ENCODE measurements at regions of chr15 and their contacts with region 1.

Region 1: DNA sequence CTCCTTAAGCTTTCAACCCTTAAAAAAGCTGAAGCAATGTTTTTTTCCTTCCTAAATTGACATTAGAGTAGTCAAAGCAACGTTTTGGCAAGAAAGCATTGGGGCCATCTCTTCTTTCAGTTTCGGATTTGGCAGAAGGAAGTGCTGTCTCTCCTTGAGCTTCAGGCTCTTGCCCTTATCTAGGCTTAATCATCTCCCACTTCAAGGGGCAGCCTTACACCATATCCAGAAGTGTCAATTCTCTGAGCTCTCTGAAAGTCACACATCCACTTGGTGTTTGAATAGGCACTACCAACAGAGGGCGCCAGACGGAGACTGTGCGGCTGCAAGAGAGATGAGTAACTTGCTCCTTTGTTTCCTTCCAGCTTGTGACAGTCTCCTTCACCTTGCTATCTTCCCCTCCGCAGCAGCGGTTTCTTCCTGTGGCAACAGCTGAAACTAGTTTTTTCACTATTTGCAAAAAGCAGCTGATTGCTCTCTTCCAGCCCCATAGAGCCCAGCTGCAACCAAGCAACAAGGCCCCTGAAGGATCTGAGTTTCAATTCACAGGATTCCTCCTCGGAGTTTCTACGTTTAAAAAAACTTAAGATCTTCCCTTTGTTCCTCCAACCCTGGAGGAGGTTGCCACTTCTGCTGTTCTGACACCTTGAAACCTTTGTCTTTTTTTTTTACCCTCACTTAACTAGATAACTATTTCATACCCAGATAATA is 147.0 kb upstream of the SLCO3A1 start:
- DNase-seq: peak; percentile 97
- H3K4me3 Mint-ChIP-seq: peak overlapping the region; percentile 11
- H3K27ac Mint-ChIP-seq: peak overlapping the region; percentile 67
- H3K4me1 Mint-ChIP-seq: peaks cover 17% of the 10 kb centered on the region
- H3K27me3 Mint-ChIP-seq: peaks cover 25% of the 10 kb centered on the region

Region 2: DNA sequence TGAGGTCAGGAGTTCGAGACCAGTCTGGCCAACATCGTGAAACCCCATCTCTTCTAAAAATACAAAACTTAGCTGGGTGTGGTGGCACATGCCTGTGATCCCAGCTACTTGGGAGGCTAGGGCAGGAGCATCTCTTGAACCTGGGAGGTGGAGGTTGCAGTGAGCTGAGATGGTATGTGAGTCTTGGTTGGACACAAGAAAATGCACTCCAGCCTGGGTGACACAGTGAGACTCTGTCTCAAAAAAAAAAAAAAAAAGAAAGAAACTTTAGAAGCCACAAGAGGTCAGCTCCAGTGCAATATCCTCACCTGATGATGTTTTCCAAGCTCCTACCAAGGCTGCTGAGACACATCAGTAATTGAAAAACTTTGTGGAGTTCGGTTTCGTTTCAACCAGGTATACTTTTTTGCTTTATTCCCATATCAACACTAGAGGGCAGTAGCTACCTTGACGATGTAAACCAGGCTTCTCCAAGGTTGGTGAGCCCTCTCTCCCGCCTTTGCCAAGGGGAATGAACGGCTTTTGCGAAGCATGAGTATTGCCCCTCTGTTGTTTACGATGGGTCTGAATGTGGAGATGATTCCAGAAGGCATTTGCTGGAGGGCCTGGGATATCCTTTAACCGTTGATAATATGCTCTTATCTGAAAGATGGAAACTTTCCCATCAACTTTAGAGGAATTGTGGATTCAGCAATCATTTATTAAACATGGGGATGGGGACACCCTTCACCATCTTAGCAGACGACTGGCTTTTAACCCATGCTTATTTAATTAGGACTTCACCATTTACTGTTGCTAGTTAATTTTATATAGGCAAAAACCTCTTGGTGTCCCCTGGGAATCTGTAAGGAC is 403.7 kb before region 1 on chr15:
- intact Hi-C with region 1: loop called (anchors 2 kb)
- DNase-seq: peak; percentile 78
- H3K4me3 Mint-ChIP-seq: no peak overlapping the region
- H3K27ac Mint-ChIP-seq: no peak overlapping the region
- H3K4me1 Mint-ChIP-seq: peaks cover 23% of the 10 kb centered on the region
- H3K27me3 Mint-ChIP-seq: peaks cover 63% of the 10 kb centered on the region

Region 3: DNA sequence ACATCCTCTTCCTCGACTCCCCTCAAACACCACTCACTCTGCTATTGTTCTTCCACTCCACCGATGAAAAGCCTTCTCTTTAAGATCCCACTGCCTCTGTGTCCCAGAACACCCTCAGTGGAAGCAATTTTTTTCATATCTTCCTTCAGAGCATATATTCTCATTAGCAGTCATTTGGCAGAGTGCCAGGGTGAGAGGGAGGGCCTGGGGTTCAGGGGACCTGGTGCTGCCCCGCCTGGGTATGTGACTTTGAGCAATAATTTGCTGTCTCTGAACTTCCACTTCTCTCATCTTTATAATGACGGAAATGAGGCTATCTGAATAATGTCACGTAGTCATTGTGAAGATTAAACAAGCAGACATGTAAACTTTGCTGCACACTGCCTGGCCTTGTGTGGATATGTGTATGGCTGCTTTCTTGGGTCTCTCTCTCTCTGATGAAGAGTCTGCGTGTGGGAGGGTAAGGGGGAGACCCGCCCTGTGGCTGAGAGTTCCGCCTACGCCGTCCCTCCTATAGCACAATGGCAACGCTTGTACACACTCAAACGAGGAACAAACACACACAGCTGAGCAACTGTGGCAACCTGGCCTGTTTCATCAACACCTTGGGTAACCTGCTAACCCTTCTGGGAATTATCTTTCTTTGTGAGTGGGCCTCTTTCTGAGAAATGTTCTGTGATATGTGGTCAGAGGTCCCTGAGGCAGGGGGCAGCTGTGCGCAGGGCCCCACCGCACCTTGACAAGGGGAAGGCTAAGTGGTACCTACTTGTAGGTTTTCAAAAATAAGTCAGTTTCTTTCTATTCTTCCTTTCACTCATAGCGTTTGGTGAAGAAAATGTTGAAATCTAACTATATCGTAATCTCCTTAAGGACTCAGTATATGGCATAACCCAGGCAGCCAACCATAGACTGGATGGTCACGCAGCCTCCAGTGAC is 236.6 kb before region 1 on chr15:
- intact Hi-C with region 1: loop called (anchors 2 kb)
- DNase-seq: peak; percentile 88
- H3K4me3 Mint-ChIP-seq: peak overlapping the region; percentile 69
- H3K27ac Mint-ChIP-seq: peak overlapping the region; percentile 84
- H3K4me1 Mint-ChIP-seq: peaks cover 44% of the 10 kb centered on the region
- H3K27me3 Mint-ChIP-seq: no peaks in the 10 kb centered on the region

Region 4: GRCh38 chr15:91649831-91650321 is 56.6 kb before region 1 on chr15:
- intact Hi-C with region 1: no loop called
- DNase-seq: no peak
- H3K4me3 Mint-ChIP-seq: no peak overlapping the region
- H3K27ac Mint-ChIP-seq: no peak overlapping the region
- H3K4me1 Mint-ChIP-seq: no peaks in the 10 kb centered on the region
- H3K27me3 Mint-ChIP-seq: peaks cover 13% of the 10 kb centered on the region

Region 5: DNA sequence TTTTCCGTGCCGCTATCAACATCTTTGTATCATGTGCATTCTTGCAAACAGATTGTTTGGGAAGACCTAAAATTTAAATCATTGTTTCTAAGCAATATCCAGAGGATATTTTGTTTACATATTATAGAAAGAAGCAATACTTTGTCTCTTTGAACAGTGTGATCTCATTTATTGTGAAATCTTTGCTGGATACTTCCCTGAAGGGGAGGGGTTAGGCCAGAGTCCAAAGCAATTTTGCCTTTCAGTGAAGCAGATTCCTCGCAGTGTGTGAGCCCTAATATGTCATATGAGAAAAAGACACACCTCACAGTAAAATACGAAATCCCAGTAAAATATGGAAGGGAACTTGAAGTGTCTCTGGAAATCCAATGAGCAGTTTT is 11.7 kb before region 1 on chr15:
- intact Hi-C with region 1: no loop called
- DNase-seq: no peak
- H3K4me3 Mint-ChIP-seq: no peak overlapping the region
- H3K27ac Mint-ChIP-seq: no peak overlapping the region
- H3K4me1 Mint-ChIP-seq: no peaks in the 10 kb centered on the region
- H3K27me3 Mint-ChIP-seq: peaks cover 9% of the 10 kb centered on the region

Region 6: GRCh38 chr15:91942676-91943576 is 236.4 kb after region 1 on chr15:
- intact Hi-C with region 1: loop called (anchors 1 kb)
- DNase-seq: peak; percentile 88
- H3K4me3 Mint-ChIP-seq: peak overlapping the region; percentile 75
- H3K27ac Mint-ChIP-seq: peak overlapping the region; percentile 85
- H3K4me1 Mint-ChIP-seq: peaks cover 38% of the 10 kb centered on the region
- H3K27me3 Mint-ChIP-seq: peaks cover 4% of the 10 kb centered on the region

Region 7: DNA sequence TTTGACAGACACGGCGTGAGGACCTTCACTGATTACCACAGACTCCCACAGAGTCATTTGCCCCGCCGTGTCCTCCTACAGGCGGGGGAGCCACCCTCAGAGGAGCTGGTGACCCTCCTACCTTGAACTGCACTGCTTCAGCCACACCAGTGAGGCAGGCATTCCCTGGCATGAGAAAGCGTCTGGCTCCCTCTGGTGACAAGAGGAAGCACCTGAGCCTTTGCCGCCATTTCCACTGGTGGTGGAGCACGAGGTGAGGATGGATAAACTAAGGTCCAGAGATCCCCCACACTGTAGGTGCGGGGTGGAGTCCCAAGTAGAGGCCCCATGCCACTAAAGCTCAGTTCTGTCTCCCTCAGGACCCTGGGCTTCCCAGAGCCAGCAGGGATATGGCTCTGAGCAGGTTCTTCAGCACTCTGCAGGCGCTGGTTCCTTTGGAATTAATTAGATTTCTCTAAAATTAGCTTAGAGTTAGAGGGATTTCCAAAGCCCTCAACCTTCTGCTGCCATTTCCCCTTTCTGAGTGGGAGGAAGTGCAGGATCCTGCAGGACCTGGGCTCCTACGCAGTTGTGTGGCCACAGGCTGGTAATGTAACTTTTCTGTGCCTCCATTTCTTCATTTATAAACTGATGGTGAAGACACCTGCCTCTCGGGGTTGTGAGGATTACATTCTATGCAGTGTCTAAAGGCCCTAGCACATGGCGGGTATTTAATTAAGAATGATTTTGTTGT is 371.0 kb after region 1 on chr15:
- intact Hi-C with region 1: loop called (anchors 1 kb)
- DNase-seq: peak; percentile 89
- H3K4me3 Mint-ChIP-seq: no peak overlapping the region
- H3K27ac Mint-ChIP-seq: no peak overlapping the region
- H3K4me1 Mint-ChIP-seq: peaks cover 18% of the 10 kb centered on the region
- H3K27me3 Mint-ChIP-seq: no peaks in the 10 kb centered on the region